Activated CD8-positive, alpha-beta T cell treated with anti-CD3 and anti-CD28 coated beads, Interleukin-2, amount 10 ng/mL, durations not matched to agents 7 days and 5 days (primary cell): ENCODE measurements at regions of chr15 and their contacts with region 1.

Region 1: DNA sequence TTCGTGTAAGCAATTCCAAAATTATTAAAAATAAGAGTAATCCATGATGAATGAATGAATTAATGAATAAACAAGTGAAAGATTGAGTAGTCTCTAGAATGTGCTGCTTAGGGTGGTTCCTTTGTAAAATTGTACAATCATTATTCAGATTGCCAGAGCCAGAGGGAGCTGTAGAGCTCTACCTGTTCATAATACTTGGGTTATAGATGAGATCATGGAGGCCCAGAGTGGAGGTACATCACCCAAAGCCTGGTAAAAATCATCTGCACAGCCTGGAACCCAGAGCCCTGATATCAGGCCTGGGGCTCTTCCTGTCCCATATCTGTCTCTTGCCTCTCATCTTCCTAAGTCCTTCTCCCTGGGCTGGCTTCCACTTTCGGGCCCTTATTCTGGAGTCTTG is 297.2 kb downstream of the RPLP1 start:
- DNase-seq: no peak
- ATAC-seq: no peak
- H3K4me3 Mint-ChIP-seq: no peak overlapping the region
- H3K27ac Mint-ChIP-seq: no peak overlapping the region
- H3K4me1 Mint-ChIP-seq: peaks cover 66% of the 10 kb centered on the region
- H3K27me3 Mint-ChIP-seq: peaks cover 7% of the 10 kb centered on the region

Region 2: GRCh38 chr15:69576035-69576526 is 173.7 kb before region 1 on chr15:
- CTCF ChIA-PET with region 1: interaction called, 10 read pairs
- POLR2A ChIA-PET with region 1: no interaction called
- DNase-seq: peak; percentile 75
- ATAC-seq: peak; percentile 80
- H3K4me3 Mint-ChIP-seq: no peak overlapping the region
- H3K27ac Mint-ChIP-seq: peak overlapping the region; percentile 48
- H3K4me1 Mint-ChIP-seq: peaks cover 53% of the 10 kb centered on the region
- H3K27me3 Mint-ChIP-seq: peaks cover 15% of the 10 kb centered on the region

Region 3: DNA sequence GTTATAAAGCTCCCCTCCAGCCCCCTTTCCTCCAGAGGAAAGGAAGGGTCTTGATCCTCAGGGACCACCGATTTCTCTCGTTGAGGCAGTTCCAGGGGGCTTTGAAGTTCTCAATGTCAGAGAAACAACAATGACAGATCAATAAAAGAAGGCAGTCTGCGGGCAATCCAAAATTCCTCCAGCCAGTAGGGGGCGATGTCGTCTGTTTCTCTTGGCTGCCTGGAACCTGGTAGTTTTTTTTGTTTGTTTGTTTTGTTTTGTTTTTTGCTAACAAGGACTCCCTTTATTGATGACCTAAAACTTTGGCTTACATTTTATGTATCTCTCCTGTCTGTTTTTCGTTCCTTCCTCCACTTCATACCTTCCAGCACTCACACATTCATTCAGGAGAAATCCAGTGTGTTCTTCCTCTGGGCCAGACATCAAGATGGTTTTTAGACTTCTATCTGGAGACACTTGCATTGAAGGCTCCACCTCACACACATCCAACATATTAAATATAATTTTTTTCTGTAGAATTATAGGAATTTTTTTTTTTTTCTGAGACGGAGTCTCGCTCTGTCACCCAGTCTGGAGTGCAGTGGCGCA is 20.5 kb before region 1 on chr15:
- CTCF ChIA-PET with region 1: interaction called, 15 read pairs
- POLR2A ChIA-PET with region 1: no interaction called
- DNase-seq: peak; percentile 81
- ATAC-seq: peak; percentile 56
- H3K4me3 Mint-ChIP-seq: no peak overlapping the region
- H3K27ac Mint-ChIP-seq: no peak overlapping the region
- H3K4me1 Mint-ChIP-seq: peaks cover 79% of the 10 kb centered on the region
- H3K27me3 Mint-ChIP-seq: peaks cover 9% of the 10 kb centered on the region

Region 4: GRCh38 chr15:69760890-69761568 is 11.2 kb after region 1 on chr15:
- CTCF ChIA-PET with region 1: interaction called, 44 read pairs
- POLR2A ChIA-PET with region 1: interaction called, 14 read pairs
- DNase-seq: peak; percentile 92
- ATAC-seq: peak; percentile 69
- H3K4me3 Mint-ChIP-seq: peak overlapping the region; percentile 43
- H3K27ac Mint-ChIP-seq: peak overlapping the region; percentile 85
- H3K4me1 Mint-ChIP-seq: peaks cover 74% of the 10 kb centered on the region
- H3K27me3 Mint-ChIP-seq: peaks cover 5% of the 10 kb centered on the region